ENCODE measurements at regions of chr18 and their contacts with region 1.

Region 1: GRCh38 chr18:24063121-24063731 is 48.7 kb downstream of the TTC39C start:
- DNase-seq: peak; percentile 47
- H3K4me3 Mint-ChIP-seq: no peak overlapping the region
- H3K27ac Mint-ChIP-seq: peak overlapping the region; percentile 7
- H3K4me1 Mint-ChIP-seq: peaks cover 53% of the 10 kb centered on the region
- H3K27me3 Mint-ChIP-seq: no peaks in the 10 kb centered on the region

Region 2: GRCh38 chr18:23986600-23987359 is 76.4 kb before region 1 on chr18:
- CTCF ChIA-PET with region 1: no interaction called
- intact Hi-C with region 1: loop called (anchors 2 kb)
- DNase-seq: peak; percentile 25
- H3K4me3 Mint-ChIP-seq: no peak overlapping the region
- H3K27ac Mint-ChIP-seq: peak overlapping the region; percentile 60
- H3K4me1 Mint-ChIP-seq: peaks cover 46% of the 10 kb centered on the region
- H3K27me3 Mint-ChIP-seq: no peaks in the 10 kb centered on the region

Region 3: GRCh38 chr18:24189007-24189528 is 125.8 kb after region 1 on chr18:
- CTCF ChIA-PET with region 1: no interaction called
- intact Hi-C with region 1: no loop called
- DNase-seq: no peak
- H3K4me3 Mint-ChIP-seq: no peak overlapping the region
- H3K27ac Mint-ChIP-seq: no peak overlapping the region
- H3K4me1 Mint-ChIP-seq: no peaks in the 10 kb centered on the region
- H3K27me3 Mint-ChIP-seq: peaks cover 4% of the 10 kb centered on the region

Measured in activated naive CD4-positive, alpha-beta T cell treated with anti-CD3 and anti-CD28 coated beads for 36 hours (primary cell).